ENCODE measurements at regions of chr3 and their contacts with region 1.

Region 1: GRCh38 chr3:171566803-171567422 is 106.7 kb upstream of the TNIK start:
- DNase-seq: peak; percentile 6
- H3K4me3 ChIP-seq: no peak overlapping the region
- H3K27ac ChIP-seq: no peak overlapping the region
- H3K4me1 ChIP-seq: no peaks in the 10 kb centered on the region
- H3K27me3 ChIP-seq: no peaks in the 10 kb centered on the region
- CTCF ChIP-seq: peak; percentile 53 to 86 (median 76)
- POLR2A ChIP-seq: no peak

Region 2: GRCh38 chr3:170961616-170962400 is 605.1 kb before region 1 on chr3:
- intact Hi-C with region 1: loop called (anchors 2 kb)
- DNase-seq: no peak
- H3K4me3 ChIP-seq: no peak overlapping the region
- H3K27ac ChIP-seq: no peak overlapping the region
- H3K4me1 ChIP-seq: no peaks in the 10 kb centered on the region
- H3K27me3 ChIP-seq: no peaks in the 10 kb centered on the region
- CTCF ChIP-seq: peak in 3 of 4 experiments; percentile 30 to 73 (median 66)
- POLR2A ChIP-seq: no peak

Region 3: DNA sequence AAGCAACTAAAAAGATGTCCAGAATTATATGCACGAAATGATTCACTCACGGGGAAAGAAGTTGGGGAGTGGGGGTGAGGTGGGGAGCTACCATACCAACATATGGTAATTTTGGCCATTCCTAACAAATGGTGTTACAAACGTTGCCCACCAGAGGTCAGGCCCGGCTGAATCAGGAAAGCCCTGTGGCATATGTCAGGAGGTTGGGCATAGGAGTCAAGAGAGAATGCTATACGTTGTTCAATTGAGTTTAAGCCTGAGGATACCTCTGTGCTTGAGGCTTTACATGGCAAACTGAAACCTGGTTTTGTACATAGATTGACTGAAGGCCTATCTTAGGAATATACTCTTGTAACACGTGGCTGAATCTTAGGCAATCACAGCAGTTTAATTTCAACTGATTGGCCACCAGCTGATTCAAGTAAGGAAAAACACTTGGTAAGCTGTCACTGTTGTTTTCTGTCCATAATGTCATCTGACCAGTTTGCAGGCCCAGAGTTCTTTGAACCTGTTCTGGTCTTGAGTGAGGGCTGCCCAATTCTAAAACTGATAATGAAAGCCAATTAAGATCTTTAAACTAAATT is 517.0 kb before region 1 on chr3:
- intact Hi-C with region 1: loop called (anchors 2 kb)
- DNase-seq: no peak
- H3K4me3 ChIP-seq: no peak overlapping the region
- H3K27ac ChIP-seq: no peak overlapping the region
- H3K4me1 ChIP-seq: no peaks in the 10 kb centered on the region
- H3K27me3 ChIP-seq: no peaks in the 10 kb centered on the region
- CTCF ChIP-seq: peak; percentile 12 to 50 (median 26)
- POLR2A ChIP-seq: no peak

Region 4: GRCh38 chr3:171157286-171157685 is 409.6 kb before region 1 on chr3:
- intact Hi-C with region 1: loop called (anchors 10 kb)
- DNase-seq: no peak
- H3K4me3 ChIP-seq: no peak overlapping the region
- H3K27ac ChIP-seq: no peak overlapping the region
- H3K4me1 ChIP-seq: no peaks in the 10 kb centered on the region
- H3K27me3 ChIP-seq: no peaks in the 10 kb centered on the region
- CTCF ChIP-seq: no peak
- POLR2A ChIP-seq: no peak

Region 5: DNA sequence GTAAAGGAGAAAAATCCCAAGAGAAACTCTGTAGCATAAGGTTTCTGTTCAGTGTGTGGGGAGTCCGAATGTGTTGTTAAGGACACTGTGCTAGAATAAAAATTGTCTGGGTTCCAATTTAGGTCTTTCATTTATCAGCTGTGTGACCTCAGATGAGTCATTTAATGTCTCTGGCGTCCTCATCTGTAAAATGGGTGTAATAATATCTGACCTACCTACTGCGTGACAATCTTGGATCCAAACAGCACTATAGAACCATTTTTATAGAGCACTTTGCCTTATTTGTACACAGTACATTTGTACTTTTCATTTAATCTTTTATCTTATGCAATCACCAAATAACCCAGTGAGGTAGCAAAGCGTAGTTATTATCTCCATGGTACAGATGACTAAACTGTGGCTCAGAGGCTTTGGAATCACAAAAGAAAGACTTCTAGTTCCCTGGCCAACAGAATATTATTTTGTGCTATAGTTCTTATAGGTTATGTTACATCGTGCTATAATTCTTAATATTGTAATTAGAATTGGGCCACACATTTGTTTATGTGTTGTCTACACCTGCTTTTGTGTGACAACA is 60.1 kb before region 1 on chr3:
- intact Hi-C with region 1: no loop called
- DNase-seq: no peak
- H3K4me3 ChIP-seq: no peak overlapping the region
- H3K27ac ChIP-seq: no peak overlapping the region
- H3K4me1 ChIP-seq: no peaks in the 10 kb centered on the region
- H3K27me3 ChIP-seq: no peaks in the 10 kb centered on the region
- CTCF ChIP-seq: no peak
- POLR2A ChIP-seq: no peak

Region 6: GRCh38 chr3:171585029-171585428 is 18.1 kb after region 1 on chr3:
- intact Hi-C with region 1: no loop called
- DNase-seq: no peak
- H3K4me3 ChIP-seq: no peak overlapping the region
- H3K27ac ChIP-seq: no peak overlapping the region
- H3K4me1 ChIP-seq: no peaks in the 10 kb centered on the region
- H3K27me3 ChIP-seq: no peaks in the 10 kb centered on the region
- CTCF ChIP-seq: no peak
- POLR2A ChIP-seq: no peak

Measured in prostate gland (tissue), 2 donors.